Endothelial cell of umbilical vein (primary cell): ENCODE measurements at regions of chr18 and their contacts with region 1.

Region 1: DNA sequence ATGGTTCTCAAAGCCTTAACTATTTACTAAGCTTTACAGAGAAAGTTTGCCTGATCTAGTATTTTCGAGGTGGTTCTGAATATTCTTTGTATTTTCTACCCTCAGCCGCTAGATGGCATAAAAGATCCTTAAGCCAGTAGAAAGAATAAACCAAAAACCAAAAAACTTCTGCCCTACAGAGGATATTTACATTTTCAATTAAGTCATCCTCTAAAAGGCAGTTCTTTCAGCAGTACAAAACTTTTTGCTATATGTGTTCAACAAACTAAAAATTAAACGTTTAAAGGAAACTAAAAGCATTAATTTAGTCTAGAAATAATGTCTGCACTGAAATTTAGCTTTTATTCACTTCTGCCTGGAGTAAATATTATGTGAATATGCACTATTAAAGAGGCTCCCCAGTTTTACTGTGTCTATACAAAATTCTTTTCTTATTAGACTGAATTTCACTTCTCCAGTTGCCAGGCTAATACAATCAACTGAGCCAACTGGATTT is 297.5 kb downstream of the PIEZO2 start:
- DNase-seq: peak; percentile 70
- H3K4me3 ChIP-seq: no peak overlapping the region
- H3K27ac ChIP-seq: no peak overlapping the region
- H3K4me1 ChIP-seq: peaks cover 18% of the 10 kb centered on the region
- H3K27me3 ChIP-seq: no peaks in the 10 kb centered on the region
- CTCF ChIP-seq: peak in 1 of 2 donors; percentile 52
- POLR2A ChIP-seq: no peak

Region 2: GRCh38 chr18:10560450-10561045 is 291.3 kb before region 1 on chr18:
- CTCF ChIA-PET with region 1: interaction called, 24 read pairs
- POLR2A ChIA-PET with region 1: no interaction called
- dilution Hi-C with region 1: no loop called
- intact Hi-C with region 1: loop called (anchors 5 kb)
- DNase-seq: peak; percentile 69
- H3K4me3 ChIP-seq: no peak overlapping the region
- H3K27ac ChIP-seq: no peak overlapping the region
- H3K4me1 ChIP-seq: peaks cover 2% of the 10 kb centered on the region
- H3K27me3 ChIP-seq: no peaks in the 10 kb centered on the region
- CTCF ChIP-seq: peak; percentile 70 to 79
- POLR2A ChIP-seq: no peak

Region 3: GRCh38 chr18:10841203-10841602 is 10.7 kb before region 1 on chr18:
- CTCF ChIA-PET with region 1: interaction called, 40 read pairs
- POLR2A ChIA-PET with region 1: no interaction called
- dilution Hi-C with region 1: no loop called
- intact Hi-C with region 1: no loop called
- DNase-seq: no peak
- H3K4me3 ChIP-seq: no peak overlapping the region
- H3K27ac ChIP-seq: no peak overlapping the region
- H3K4me1 ChIP-seq: no peaks in the 10 kb centered on the region
- H3K27me3 ChIP-seq: no peaks in the 10 kb centered on the region
- CTCF ChIP-seq: no peak
- POLR2A ChIP-seq: no peak

Region 4: DNA sequence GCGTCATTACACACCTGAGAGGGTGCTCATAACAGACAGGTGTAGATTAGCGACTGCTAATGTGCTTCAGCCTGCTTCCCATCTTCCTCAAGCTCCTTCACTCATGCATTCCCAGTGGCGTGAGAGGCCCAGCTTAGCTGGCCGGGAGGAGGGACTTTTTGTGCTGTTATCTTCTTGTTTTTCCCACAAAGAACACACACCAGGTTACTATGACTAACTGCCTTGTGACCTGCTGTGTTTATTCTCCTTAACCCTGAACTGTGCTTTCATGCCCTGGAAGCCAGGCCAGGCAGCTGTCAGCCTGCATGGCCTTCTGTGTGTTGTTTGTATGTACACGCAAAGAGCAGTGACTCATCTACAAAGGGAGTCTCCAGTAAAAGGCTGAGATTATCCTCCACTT is 153.7 kb after region 1 on chr18:
- CTCF ChIA-PET with region 1: interaction called, 14 read pairs
- POLR2A ChIA-PET with region 1: no interaction called
- dilution Hi-C with region 1: no loop called
- intact Hi-C with region 1: no loop called
- DNase-seq: peak; percentile 95
- H3K4me3 ChIP-seq: peak overlapping the region in 1 of 3 experiments; percentile 5
- H3K27ac ChIP-seq: peak overlapping the region; percentile 87
- H3K4me1 ChIP-seq: peaks cover 43% of the 10 kb centered on the region
- H3K27me3 ChIP-seq: no peaks in the 10 kb centered on the region
- CTCF ChIP-seq: no peak
- POLR2A ChIP-seq: no peak

Region 5: DNA sequence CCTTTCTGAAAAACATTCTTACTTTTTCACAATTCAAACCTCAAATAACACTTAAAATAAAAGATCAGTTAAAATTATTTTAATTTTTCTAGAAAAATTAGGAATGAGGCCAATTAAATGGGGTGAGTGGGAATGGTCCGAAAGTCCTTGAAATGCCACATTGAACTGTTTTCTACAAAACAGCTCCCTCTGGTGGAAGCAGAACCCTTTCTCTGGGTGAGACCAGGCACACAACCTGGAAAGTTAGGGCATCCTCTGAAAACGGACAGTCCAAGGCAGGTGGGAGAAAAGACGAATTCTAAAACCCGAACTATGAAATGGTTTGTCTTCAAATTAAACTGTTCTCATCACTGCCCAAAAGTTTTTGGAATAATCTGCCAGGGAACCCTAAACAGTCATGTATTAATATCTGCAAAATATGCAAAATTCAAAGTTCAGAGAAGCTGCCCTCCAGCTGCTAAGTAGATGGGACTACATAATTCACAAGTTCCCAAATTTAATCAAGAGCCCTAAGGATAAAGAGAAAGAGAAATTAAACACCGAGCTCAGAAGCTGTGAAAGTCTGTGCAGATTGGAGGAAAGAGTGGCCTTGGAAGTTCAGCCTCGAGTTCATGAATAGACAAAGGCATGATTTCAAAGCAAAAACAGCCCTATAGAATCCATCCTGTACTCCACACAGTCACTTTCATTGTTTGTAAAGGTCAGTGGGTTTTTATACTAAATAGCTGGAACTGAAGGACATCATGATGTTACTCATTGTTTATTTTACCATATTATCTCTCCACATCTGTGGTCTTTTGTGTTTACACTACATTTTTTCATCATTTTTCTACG is 189.2 kb after region 1 on chr18:
- CTCF ChIA-PET with region 1: interaction called, 320 read pairs
- POLR2A ChIA-PET with region 1: no interaction called
- dilution Hi-C with region 1: no loop called
- intact Hi-C with region 1: loop called (anchors 1 kb)
- DNase-seq: peak; percentile 64
- H3K4me3 ChIP-seq: no peak overlapping the region
- H3K27ac ChIP-seq: no peak overlapping the region
- H3K4me1 ChIP-seq: peaks cover 23% of the 10 kb centered on the region
- H3K27me3 ChIP-seq: no peaks in the 10 kb centered on the region
- CTCF ChIP-seq: peak; percentile 71 to 81
- POLR2A ChIP-seq: no peak

Region 6: DNA sequence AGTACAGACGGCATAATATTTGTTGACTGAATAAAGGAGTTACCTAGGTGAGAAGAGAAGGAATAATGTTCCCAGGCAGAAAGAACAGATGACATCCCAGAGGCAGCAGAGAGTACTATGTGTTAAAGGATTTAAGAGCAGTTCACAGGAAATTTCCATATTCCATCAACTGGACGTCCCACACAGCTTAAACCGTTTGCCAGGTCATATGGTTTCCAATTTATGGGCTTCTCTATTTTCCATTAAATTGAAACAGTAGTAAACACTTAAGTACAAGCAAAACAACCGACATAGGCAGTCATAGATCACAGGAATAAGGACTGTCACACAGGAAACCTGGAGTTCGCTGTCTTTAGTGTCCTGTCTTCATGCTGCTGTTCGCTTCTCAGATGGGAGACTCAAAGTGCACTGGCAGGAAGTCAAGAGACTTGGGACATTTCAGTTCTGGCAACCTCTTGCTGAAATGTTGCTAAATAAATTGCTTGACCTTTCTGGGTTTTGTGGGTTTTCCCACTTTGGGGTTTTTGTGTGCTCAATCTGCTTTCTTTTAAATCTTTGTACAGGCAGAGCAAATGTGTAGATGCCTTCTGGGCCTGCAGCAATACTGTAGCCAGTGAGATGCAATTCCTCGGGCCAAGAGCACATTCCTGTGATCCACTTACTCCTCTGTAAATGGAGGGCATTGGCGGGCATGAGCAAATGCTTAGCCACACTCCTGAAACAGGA is 303.3 kb after region 1 on chr18:
- CTCF ChIA-PET with region 1: interaction called, 128 read pairs
- POLR2A ChIA-PET with region 1: no interaction called
- dilution Hi-C with region 1: no loop called
- intact Hi-C with region 1: loop called (anchors 1 kb)
- DNase-seq: no peak
- H3K4me3 ChIP-seq: no peak overlapping the region
- H3K27ac ChIP-seq: no peak overlapping the region
- H3K4me1 ChIP-seq: no peaks in the 10 kb centered on the region
- H3K27me3 ChIP-seq: peaks cover 9 to 14% of the 10 kb centered on the region in 2 experiments
- CTCF ChIP-seq: no peak
- POLR2A ChIP-seq: no peak

Region 7: DNA sequence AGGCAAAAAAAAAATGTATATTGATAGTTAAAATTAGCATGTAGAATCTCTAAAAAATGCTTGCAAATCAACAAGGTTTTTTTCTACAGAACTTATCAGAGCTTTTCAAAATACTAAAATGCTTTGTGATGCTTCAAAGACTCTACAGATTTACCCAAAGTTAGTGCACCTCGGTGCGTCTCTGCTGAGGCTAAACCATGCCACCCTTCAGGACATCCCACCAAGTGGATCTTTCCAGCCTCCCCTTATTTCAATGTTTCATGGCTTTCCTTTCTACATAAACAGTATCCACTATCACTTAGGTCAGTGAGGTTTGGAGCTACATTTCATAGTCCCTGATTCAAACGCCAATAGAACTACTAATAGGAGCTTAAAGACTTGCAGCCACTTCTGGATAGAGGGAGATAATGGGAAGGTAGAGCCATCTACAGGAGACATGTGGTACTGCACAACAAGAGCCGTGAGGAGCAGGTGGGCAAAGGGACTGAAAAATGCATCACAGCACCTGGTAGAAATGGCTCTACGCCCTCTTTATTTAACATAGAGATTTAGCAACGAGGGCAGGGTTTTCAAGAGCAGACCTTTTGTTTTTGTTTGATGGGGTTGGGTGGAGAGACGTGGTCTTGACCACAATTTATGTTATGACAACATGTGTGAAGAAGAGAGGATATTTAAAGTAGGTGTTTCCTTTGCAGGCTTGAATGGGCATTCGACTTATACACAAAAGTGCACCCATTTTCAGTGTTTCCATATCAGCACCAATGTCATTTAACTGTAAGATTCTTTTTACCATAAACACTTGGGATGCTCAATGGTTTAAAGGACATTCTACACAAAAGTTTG is 701.4 kb after region 1 on chr18:
- CTCF ChIA-PET with region 1: interaction called, 15 read pairs
- POLR2A ChIA-PET with region 1: no interaction called
- dilution Hi-C with region 1: no loop called
- intact Hi-C with region 1: no loop called
- DNase-seq: peak; percentile 59
- H3K4me3 ChIP-seq: no peak overlapping the region
- H3K27ac ChIP-seq: no peak overlapping the region
- H3K4me1 ChIP-seq: no peaks in the 10 kb centered on the region
- H3K27me3 ChIP-seq: no peaks in the 10 kb centered on the region
- CTCF ChIP-seq: peak; percentile 76 to 86
- POLR2A ChIP-seq: no peak